Posterior cingulate gyrus (tissue), 11 donors: ENCODE measurements at regions of chr5 and their contacts with region 1.

Region 1: GRCh38 chr5:88729084-88729828 is 153.7 kb downstream of the MEF2C start:
- DNase-seq: peak in 7 of 10 donors; percentile 47 to 80 (median 60)

Region 2: GRCh38 chr5:88883059-88883835 is 154.0 kb after region 1 on chr5 and contains the start of gene MEF2C:
- intact Hi-C with region 1: loop called (anchors 10 kb)
- DNase-seq: peak; percentile 44 to 94 (median 62)

Region 3: GRCh38 chr5:90184764-90185163 is 1455.5 kb after region 1 on chr5:
- intact Hi-C with region 1: loop called (anchors 5 kb)
- DNase-seq: no peak

Region 4: GRCh38 chr5:90264689-90265544 is 1535.7 kb after region 1 on chr5:
- intact Hi-C with region 1: loop called (anchors 2 kb)
- DNase-seq: peak; percentile 50 to 95 (median 69)

Region 5: GRCh38 chr5:90386099-90386710 is 1656.9 kb after region 1 on chr5:
- intact Hi-C with region 1: loop called (anchors 10 kb)
- DNase-seq: no peak

Region 6: DNA sequence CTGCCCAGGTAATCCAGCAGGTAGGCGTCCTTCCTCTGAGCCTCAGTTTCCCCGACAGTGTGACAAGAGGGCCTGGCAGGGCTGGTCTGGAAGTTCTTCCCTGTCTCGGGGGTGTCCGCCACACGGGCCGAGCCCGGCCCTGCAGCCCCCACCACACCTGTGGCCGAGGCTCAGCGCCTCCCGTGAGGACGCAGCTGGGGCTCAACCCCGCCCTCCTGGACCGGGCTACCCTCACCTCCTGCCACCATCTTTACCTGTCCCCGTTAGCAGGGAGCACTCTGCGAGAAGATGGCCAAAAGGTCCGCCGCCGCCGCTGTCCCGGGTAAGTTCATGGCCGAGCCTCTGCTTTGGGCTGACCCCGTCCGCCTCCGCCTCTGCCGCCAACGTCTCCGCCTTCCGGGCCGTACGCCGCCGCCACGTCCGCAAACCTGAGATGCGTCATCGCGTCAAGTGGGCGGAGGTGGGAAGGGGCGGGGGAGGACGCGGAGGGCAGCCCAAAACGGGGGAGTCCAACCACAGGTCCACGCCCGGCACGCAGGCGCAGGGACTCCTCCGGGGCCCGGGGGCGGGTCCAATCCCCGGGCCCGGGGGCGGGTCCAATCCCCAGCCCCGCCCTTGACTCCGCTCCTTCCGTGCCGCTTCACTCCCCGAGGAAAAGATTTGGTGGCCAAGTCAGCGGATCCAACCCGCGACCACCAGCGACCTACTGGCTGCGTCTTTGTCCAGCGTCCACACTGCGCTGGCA is 1800.1 kb after region 1 on chr5 and contains the start of gene LYSMD3:
- intact Hi-C with region 1: loop called (anchors 5 kb)
- DNase-seq: peak; percentile 90 to 99 (median 96)